Activated CD4-positive, alpha-beta T cell treated with anti-CD3 and anti-CD28 coated beads for 36 hours (primary cell): ENCODE measurements at regions of chr11 and their contacts with region 1.

Region 1: DNA sequence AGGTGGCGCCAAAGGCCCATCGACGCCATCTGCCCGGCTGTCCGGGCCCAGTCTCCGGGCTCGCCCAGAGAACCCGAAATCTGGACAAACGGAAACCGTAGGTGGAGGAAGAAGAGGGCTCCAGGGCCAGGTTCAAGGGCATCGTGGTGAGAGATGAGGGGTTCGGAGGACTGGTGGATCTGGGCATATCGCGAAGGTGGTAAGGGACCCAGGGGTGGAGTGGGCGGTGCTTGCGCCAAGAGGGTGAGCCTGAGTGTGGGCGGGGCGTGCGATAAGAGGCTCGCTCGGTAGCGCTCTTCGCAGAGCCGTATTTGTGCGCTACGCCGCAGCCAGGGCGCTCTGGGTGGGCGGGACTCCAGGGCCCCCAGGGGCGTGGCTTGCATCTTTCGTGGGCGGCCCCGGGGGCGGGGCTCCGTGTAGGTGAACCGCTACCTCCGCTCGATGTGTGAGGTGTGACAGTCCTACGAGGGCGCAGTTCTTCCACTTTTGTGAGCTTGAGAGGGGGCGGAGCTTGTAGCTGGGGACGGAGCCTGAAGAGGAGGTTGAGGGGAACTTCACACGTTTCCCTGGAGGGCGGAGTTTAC is 4.8 kb downstream of the CD248 start:
- DNase-seq: peak; percentile 98
- ATAC-seq: peak; percentile 83
- H3K4me3 Mint-ChIP-seq: peak overlapping the region; percentile 79
- H3K27ac Mint-ChIP-seq: peak overlapping the region; percentile 91
- H3K4me1 Mint-ChIP-seq: peaks cover 33% of the 10 kb centered on the region
- H3K27me3 Mint-ChIP-seq: no peaks in the 10 kb centered on the region

Region 2: GRCh38 chr11:66222358-66223149 is 89.5 kb before region 1 on chr11:
- CTCF ChIA-PET with region 1: no interaction called
- POLR2A ChIA-PET with region 1: no interaction called
- intact Hi-C with region 1: loop called in 1 of 2 experiments (anchors 1 kb)
- DNase-seq: peak; percentile 97
- ATAC-seq: peak; percentile 94
- H3K4me3 Mint-ChIP-seq: peak overlapping the region; percentile 27
- H3K27ac Mint-ChIP-seq: peak overlapping the region; percentile 90
- H3K4me1 Mint-ChIP-seq: peaks cover 18% of the 10 kb centered on the region
- H3K27me3 Mint-ChIP-seq: no peaks in the 10 kb centered on the region

Region 3: GRCh38 chr11:66328307-66329144 is 16.5 kb after region 1 on chr11:
- CTCF ChIA-PET with region 1: interaction called, 19 read pairs
- POLR2A ChIA-PET with region 1: no interaction called
- intact Hi-C with region 1: loop called (anchors 1 kb)
- DNase-seq: peak; percentile 90
- ATAC-seq: peak; percentile 91
- H3K4me3 Mint-ChIP-seq: no peak overlapping the region
- H3K27ac Mint-ChIP-seq: peak overlapping the region; percentile 73
- H3K4me1 Mint-ChIP-seq: peaks cover 31% of the 10 kb centered on the region
- H3K27me3 Mint-ChIP-seq: no peaks in the 10 kb centered on the region

Region 4: GRCh38 chr11:66386171-66387069 is 74.4 kb after region 1 on chr11:
- CTCF ChIA-PET with region 1: interaction called, 34 read pairs
- POLR2A ChIA-PET with region 1: no interaction called
- intact Hi-C with region 1: loop called (anchors 1 kb)
- DNase-seq: peak; percentile 92
- ATAC-seq: peak; percentile 80
- H3K4me3 Mint-ChIP-seq: peak overlapping the region; percentile 47
- H3K27ac Mint-ChIP-seq: peak overlapping the region; percentile 15
- H3K4me1 Mint-ChIP-seq: peaks cover 7% of the 10 kb centered on the region
- H3K27me3 Mint-ChIP-seq: no peaks in the 10 kb centered on the region

Region 5: DNA sequence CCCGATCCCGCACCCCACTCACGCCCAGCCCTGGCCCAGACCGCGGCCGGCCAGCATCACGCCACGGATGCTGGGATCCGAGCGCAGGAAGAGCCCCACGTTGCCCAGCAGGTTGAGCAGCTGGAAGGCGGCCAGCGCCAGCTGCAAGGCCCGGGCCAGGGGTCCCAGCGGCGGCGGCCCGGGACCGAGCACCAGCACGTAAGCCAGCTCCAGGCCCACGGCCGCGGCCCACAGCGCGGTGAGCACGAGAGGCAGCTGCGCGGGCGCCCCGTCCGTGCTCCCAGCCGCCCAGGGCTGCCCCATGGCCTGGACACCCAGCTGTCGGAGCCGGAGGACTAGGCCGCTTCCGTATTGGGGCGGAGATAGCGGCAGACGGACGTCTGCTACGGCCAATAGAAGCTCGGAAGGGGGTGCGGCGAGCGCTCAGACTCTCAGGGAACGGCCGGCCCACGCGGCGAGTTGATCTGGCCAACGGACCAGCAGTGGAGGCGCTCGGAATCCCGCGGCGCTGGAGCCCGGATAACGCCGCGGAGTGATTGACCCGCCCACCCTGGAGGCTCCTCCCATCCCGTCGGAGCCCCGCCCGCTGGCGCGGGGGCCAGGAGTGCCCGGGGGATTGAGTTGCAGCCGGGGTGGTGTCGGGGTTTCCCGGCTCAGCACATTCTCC is 233.8 kb after region 1 on chr11 and contains the start of gene ZDHHC24:
- CTCF ChIA-PET with region 1: no interaction called
- POLR2A ChIA-PET with region 1: no interaction called
- intact Hi-C with region 1: loop called in 1 of 2 experiments (anchors 1 kb)
- DNase-seq: peak; percentile 95
- ATAC-seq: peak; percentile 94
- H3K4me3 Mint-ChIP-seq: peak within 1 kb of the TSS; percentile 76
- H3K27ac Mint-ChIP-seq: peak within 1 kb of the TSS; percentile 67
- H3K4me1 Mint-ChIP-seq: peaks cover 20% of the 10 kb centered on the region
- H3K27me3 Mint-ChIP-seq: peaks cover 5% of the 10 kb centered on the region
- total RNA-seq, gene ZDHHC24: 9.7 to 11.3 TPM

Region 6: GRCh38 chr11:66744485-66745340 is 432.7 kb after region 1 on chr11:
- CTCF ChIA-PET with region 1: no interaction called
- POLR2A ChIA-PET with region 1: no interaction called
- intact Hi-C with region 1: loop called in 1 of 2 experiments (anchors 1 kb)
- DNase-seq: peak; percentile 93
- ATAC-seq: peak; percentile 88
- H3K4me3 Mint-ChIP-seq: peak overlapping the region; percentile 95
- H3K27ac Mint-ChIP-seq: peak overlapping the region; percentile 84
- H3K4me1 Mint-ChIP-seq: peaks cover 7% of the 10 kb centered on the region
- H3K27me3 Mint-ChIP-seq: no peaks in the 10 kb centered on the region